ENCODE measurements at regions of chr7 and their contacts with region 1.

Region 1: DNA sequence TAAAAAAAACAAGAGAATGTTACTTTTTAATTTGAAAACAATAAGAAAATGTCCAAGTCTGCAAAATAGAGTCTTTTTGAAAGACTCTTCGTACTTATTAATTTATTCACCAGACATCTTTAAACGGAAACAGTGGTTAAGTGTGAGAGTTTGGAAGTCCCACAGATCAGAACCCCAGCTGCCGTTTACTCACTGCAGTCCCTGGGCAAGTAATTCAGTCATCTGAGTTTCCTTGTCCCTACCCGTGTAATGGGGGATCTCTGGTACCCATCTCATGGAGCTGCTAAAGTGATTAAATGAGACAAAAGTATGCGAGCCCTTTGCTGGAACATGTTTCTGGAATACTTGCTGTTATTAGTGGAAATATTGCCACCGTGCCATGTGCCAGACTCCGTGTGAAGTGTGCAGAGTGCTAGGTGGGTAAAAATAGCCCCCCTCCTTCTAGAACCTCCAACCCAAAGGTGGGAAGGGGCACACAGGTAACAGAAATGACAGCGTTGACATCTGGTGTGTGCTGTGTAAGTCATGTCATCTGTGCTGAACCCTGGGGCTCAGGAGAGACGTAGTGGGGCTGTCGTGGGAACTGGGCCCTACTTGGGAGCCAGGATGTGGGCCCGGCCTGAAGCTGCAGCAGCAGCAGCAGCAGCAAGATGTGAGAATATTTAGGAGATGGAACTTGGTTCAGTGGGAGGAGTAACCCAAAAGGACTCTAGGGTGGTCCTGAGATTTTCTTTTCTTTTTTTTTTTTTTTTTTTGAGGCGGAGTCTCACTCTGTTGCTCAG is 140.5 kb downstream of the CUX1 start:
- DNase-seq: no peak
- ATAC-seq: no peak
- H3K4me3 ChIP-seq: no peak overlapping the region
- H3K27ac ChIP-seq: no peak overlapping the region
- H3K4me1 ChIP-seq: no peaks in the 10 kb centered on the region
- H3K27me3 ChIP-seq: no peaks in the 10 kb centered on the region
- CTCF ChIP-seq: no peak

Region 2: DNA sequence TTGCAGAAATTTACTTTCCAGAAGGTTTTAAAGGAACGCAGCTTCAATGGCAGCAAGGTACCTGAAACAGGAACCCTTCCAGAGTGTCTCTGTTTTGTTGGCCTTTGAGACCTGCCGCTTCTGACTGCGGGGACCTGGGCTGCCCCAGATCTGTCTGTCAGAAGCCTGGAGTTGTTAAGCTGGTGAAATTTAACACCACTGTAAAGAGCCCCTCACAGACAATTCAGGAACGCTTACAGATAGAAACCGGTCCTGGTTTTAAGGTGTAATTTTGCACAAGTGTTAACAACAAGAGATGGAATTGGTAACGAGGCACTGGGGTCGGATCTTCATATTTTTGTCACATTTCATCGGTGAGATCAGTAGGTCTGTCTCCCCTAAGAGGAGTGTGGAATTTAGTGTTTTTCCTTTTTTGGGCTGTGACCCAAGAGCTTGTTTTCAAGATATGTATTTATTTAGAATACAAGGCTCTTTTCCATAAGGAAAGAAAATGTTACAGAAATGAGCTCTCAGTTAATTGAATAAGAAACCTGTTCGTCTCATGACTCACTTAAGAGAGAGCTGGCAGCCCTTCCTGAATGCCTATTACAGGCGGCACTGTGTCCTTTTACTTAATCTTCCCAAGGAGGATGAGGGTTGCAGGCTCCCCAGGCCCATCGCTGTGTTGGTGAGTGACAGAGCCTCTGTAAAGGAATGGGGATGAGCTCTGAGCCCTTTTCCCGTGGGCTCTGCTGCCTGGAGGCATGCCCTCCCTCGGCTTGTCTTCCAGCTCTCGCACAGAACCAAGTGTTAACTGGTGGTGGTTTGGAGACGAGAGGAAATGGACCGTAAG is 28.2 kb after region 1 on chr7:
- CTCF ChIA-PET with region 1: no interaction called
- POLR2A ChIA-PET with region 1: no interaction called
- in situ Hi-C with region 1: no loop called
- intact Hi-C with region 1: no loop called
- DNase-seq: no peak
- ATAC-seq: no peak
- H3K4me3 ChIP-seq: no peak overlapping the region
- H3K27ac ChIP-seq: no peak overlapping the region
- H3K4me1 ChIP-seq: no peaks in the 10 kb centered on the region
- H3K27me3 ChIP-seq: no peaks in the 10 kb centered on the region
- CTCF ChIP-seq: no peak

Region 3: DNA sequence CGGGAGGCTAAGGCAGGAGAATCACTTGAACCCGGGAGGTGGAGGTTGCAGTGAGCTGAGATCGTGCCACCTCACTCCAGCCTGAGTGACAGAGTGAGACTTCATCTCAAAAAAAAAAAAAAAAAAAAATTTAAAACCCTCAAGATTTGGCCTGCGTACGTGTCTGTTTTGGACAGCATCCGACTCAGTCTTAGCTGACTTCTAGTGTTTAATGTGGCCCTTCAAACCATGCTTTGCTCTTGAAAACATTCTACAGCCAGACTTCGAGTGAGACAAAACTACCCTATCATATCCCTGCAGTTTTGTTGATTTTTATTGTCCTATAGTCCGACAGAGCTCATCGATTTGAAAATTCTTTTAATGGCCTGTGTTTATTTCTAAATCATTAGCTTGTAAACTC is 101.6 kb after region 1 on chr7:
- CTCF ChIA-PET with region 1: no interaction called
- POLR2A ChIA-PET with region 1: interaction called, 11 read pairs
- in situ Hi-C with region 1: no loop called
- intact Hi-C with region 1: no loop called
- DNase-seq: no peak
- ATAC-seq: no peak
- H3K4me3 ChIP-seq: no peak overlapping the region
- H3K27ac ChIP-seq: no peak overlapping the region
- H3K4me1 ChIP-seq: peaks cover 3% of the 10 kb centered on the region; the same call in 1 of the 2 replicates
- H3K27me3 ChIP-seq: no peaks in the 10 kb centered on the region
- CTCF ChIP-seq: no peak

Measured in Panc1 (cell line).